IMR-90 (cell line): ENCODE measurements at regions of chr7 and their contacts with region 1.

Region 1: DNA sequence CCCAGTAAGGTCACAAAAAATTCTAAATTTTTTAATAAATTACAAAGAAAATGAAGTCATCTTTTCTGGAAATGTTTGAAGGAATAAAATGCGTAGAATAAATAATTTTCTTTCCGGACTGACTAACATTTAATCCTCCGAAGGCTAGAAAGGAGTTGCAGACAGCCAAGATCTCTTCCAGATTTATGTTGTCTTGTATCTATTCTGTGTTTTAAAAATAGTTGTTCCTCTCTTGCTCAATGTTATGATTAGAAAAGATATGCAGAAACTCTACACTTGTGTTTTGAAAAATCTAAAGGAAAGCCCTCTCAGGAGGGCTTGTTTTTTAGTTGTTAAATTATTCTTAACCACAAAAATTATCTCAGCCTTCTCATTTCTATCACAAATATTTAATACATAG is 70.7 kb downstream of the MACC1 start:
- DNase-seq: peak; percentile 50
- ATAC-seq: peak; percentile 87
- H3K4me3 ChIP-seq: no peak overlapping the region
- H3K27ac ChIP-seq: peak overlapping the region; percentile 76; the same call in 1 of the 2 replicates
- H3K4me1 ChIP-seq: peaks cover 3% of the 10 kb centered on the region; the same call in 1 of the 2 replicates
- H3K27me3 ChIP-seq: no peaks in the 10 kb centered on the region
- CTCF ChIP-seq: no peak
- POLR2A ChIP-seq: no peak
- RAD21 ChIP-seq: no peak

Region 2: DNA sequence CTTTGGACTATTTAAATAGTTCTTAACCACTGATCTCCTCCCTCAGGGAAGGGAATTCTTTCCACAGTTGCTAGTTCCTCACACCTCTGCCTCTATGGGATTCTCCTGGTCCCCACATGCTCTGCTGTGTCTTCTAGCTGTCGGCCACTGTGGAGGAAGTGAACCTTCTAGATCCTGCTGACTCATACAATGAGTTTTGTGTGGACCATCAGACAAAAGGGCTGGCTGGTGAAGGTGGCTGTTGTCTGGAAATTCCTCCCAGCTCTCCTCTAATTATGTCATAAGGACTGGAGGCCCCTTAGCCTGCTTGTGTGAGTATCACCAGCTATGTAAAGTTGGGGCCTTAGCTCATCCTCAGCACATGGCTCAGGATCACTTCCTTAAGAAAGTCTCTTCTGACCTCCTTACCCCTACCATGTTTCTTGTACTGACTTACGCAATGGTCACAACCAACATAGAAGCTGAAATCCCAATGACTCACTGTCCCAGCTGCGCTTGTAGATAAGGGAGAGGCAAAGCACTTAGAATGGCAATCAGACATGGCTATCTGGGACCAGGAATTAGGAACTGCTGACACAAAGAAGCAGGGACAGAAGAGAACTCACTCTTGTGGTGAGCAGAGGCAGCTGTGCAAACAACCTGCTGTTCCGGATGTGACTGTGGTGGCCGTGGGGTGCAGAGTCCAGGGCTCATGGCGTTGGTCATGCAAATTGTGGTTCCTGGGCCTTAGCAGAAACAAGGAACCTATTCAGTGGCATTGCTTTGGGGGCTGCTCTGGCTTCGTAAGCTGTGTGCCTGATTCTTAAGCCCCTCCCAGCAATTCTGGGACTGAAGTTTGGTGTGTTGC is 73.2 kb after region 1 on chr7:
- CTCF ChIA-PET with region 1: interaction called, 3 read pairs
- POLR2A ChIA-PET with region 1: no interaction called
- dilution Hi-C with region 1: no loop called
- in situ Hi-C with region 1: no loop called
- intact Hi-C with region 1: loop called (anchors 5 kb)
- DNase-seq: peak; percentile 99
- ATAC-seq: peak; percentile 71
- H3K4me3 ChIP-seq: no peak overlapping the region
- H3K27ac ChIP-seq: peak overlapping the region; percentile 87
- H3K4me1 ChIP-seq: peaks cover 19% of the 10 kb centered on the region
- H3K27me3 ChIP-seq: no peaks in the 10 kb centered on the region
- CTCF ChIP-seq: no peak
- POLR2A ChIP-seq: no peak
- RAD21 ChIP-seq: no peak